ENCODE measurements at regions of chr16 and their contacts with region 1.

Region 1: DNA sequence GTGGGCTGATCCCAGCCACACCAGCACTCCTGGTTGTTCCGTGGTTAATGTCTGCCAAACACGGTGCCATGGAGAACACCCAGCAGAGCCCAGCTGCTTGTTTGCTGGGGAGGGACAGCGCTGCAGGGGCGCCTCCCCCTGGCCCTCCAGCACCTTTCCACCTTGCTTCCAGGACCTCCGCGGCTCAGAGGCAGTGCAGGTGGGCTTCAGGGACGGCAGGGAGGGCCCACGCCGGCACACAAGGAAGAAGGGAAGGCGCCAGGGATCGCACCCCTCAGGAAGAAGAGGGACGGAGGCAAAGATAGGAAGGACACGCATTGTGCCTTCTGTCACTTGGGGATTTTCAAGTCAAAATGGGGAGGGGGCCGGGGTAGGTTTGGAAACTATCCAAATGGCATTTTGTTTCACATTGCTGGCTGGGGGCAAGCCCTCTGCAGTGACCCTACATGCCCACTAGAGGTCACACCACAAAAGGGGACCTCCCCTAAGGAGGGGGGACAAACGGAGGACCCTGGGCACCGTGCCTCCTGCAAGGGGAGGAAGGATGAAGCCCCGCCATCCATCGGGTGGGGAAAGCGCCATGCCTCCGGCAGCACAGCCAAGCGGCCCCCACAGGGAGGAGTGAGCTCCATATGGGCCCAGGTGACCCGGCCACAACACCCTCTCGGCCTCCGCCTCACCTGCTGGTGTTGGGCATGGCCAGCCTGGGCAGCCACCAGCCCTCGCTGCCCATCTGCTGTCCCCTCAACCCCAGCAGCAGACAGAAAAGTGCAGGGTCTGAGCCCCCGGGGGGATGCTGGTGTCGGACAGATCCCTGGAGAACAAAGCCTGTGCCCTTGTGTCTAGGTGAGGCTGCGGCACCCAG is 7.5 kb upstream of the C16orf95 start:
- DNase-seq: peak; percentile 28 to 72
- ATAC-seq: peak; percentile 76 to 96 (median 87)
- H3K4me3 ChIP-seq: no peak overlapping the region
- H3K4me3 Mint-ChIP-seq: no peak overlapping the region
- H3K27ac ChIP-seq: no peak overlapping the region
- H3K27ac Mint-ChIP-seq: peak overlapping the region in 1 of 2 donors; percentile 74
- H3K4me1 ChIP-seq: peaks cover 7% of the 10 kb centered on the region
- H3K4me1 Mint-ChIP-seq: peaks cover 0 to 11% of the 10 kb centered on the region in 2 donors
- H3K27me3 ChIP-seq: no peaks in the 10 kb centered on the region
- H3K27me3 Mint-ChIP-seq: no peaks in the 10 kb centered on the region
- CTCF ChIP-seq: peak; percentile 86

Region 2: DNA sequence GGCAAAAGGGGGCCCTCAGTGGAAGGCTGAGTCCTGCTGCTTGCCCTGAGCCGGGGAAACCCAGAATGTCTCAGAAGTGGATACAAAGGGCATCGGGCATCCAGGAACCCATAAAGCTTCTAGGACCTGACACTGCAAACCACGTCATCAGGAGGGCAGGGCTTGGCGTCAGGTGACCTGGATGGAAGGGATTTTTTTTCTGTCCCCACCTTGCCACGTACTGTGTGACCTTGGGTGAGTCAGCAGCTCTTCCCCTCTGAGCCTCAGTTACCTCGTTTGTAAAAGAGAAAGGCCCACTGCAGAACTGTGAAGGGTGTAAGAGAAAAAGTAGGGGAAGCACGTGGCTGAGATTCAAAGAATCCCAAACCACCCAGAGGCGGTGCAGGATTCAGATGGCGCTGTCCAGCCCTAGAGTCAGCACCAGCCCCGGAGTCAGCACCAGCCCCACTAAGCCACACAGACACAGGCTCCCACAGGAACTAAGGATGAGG is 61.1 kb before region 1 on chr16:
- intact Hi-C with region 1: no loop called
- DNase-seq: no peak
- ATAC-seq: no peak
- H3K4me3 ChIP-seq: no peak overlapping the region
- H3K4me3 Mint-ChIP-seq: no peak overlapping the region
- H3K27ac ChIP-seq: no peak overlapping the region
- H3K27ac Mint-ChIP-seq: no peak overlapping the region
- H3K4me1 ChIP-seq: no peaks in the 10 kb centered on the region
- H3K4me1 Mint-ChIP-seq: no peaks in the 10 kb centered on the region
- H3K27me3 ChIP-seq: no peaks in the 10 kb centered on the region
- H3K27me3 Mint-ChIP-seq: no peaks in the 10 kb centered on the region
- CTCF ChIP-seq: no peak

Region 3: DNA sequence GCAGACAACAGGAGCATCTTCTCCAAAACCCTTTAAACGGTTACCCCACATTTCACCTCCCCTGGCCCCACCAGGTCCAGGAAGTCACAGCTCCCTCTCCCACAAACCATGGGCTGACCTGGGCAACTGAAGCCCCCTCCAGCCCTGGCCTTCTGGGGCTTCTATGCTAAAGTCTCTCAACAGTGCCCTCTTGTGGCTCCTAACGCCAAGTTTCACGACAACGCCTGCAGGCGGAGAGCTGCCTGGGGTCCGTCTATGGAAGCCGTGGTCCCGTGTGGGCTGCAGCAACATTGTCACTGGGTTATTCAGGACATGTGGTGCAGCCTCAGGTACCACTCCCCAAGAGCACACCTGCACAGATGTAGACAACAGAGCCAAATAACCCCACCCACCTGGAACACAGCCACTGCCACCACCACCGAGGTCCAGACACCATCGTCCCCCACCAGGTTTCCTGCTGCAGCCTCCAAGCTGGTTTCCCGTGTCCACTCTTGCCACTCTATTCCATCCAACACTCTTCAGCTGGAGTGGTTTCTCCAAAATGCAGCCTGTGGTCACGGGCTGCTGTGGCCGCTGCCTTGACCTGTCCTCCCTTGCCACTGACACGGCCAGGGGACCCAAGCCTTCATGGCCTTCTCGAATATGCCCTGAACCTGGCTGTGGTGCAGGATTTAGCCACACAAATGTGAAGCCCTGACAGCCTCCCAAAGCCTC is 26.6 kb before region 1 on chr16:
- intact Hi-C with region 1: no loop called
- DNase-seq: peak in 1 of 2 donors; percentile 59
- ATAC-seq: peak; percentile 39 to 61 (median 49)
- H3K4me3 ChIP-seq: no peak overlapping the region
- H3K4me3 Mint-ChIP-seq: no peak overlapping the region
- H3K27ac ChIP-seq: no peak overlapping the region
- H3K27ac Mint-ChIP-seq: no peak overlapping the region
- H3K4me1 ChIP-seq: no peaks in the 10 kb centered on the region
- H3K4me1 Mint-ChIP-seq: peaks cover 0 to 6% of the 10 kb centered on the region in 2 donors
- H3K27me3 ChIP-seq: no peaks in the 10 kb centered on the region
- H3K27me3 Mint-ChIP-seq: no peaks in the 10 kb centered on the region
- CTCF ChIP-seq: peak; percentile 67

Region 4: DNA sequence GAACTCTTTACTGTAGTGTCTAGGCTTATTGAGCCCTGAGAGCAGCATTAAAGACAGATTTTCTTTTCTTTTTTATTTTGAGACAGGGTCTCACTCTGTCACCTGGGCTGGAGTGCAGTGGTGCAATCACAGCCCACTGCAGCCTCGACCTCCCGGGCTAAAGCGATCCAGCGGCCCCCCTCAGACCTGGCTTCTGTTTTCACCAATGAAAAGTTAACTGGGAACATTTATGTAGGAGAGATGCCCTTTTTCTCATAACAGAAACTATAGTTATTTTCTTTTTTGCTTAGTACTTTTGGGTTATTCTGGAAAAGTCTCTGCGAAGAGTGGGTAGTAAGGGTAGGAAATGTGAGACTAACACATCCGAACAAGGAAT is 69.0 kb after region 1 on chr16:
- intact Hi-C with region 1: loop called (anchors 2 kb)
- DNase-seq: no peak
- ATAC-seq: no peak
- H3K4me3 ChIP-seq: no peak overlapping the region
- H3K4me3 Mint-ChIP-seq: peak overlapping the region; percentile 91
- H3K27ac ChIP-seq: no peak overlapping the region
- H3K27ac Mint-ChIP-seq: peak overlapping the region; percentile 88 to 92
- H3K4me1 ChIP-seq: peaks cover 33% of the 10 kb centered on the region
- H3K4me1 Mint-ChIP-seq: peaks cover 36 to 41% of the 10 kb centered on the region in 2 donors
- H3K27me3 ChIP-seq: no peaks in the 10 kb centered on the region
- H3K27me3 Mint-ChIP-seq: no peaks in the 10 kb centered on the region
- CTCF ChIP-seq: no peak

Measured in natural killer cell (primary cell).